ENCODE measurements at regions of chr13 and their contacts with region 1.

Region 1: DNA sequence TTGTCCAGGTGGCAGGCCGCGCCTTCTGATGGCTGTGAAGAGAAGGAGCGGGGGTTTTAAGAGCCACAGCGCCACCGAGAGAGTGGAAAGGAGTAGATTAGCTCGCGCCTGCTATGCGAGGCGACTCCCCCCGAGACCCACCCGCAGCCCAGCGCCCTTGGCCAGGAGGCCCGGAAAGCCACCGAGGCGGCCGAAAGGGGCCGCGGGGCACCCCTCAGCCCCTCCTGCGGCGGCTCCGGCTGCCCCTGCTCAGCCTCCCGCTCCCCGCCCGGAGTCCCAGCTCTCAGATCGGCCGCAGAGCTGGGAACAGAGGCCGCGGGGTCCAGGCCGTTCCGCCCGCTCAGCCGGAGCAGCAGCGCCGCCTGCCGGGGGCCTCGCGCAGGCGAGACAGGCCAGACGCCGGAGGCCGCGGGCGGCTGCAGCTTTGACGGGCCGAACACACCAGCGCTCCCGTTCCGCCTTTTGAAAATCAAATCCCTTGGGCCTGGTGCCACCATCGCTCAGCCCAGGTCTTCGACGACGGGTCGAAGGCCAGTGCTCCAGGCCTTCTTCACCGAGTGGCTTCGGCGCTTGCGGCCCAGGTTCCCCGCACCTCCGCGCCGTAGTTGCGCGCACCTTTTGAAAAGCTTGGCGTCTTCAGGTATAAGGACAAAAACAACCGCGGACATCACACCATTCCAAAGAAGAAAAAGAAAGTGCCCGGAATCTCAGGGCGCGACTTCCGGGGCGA is 15.3 kb downstream of the CDX2 start:
- DNase-seq: peak; percentile 55
- ATAC-seq: peak; percentile 99
- H3K4me3 ChIP-seq: peak overlapping the region; percentile 45
- H3K27ac ChIP-seq: no peak overlapping the region
- H3K4me1 ChIP-seq: no peaks in the 10 kb centered on the region
- H3K27me3 ChIP-seq: peaks cover 54% of the 10 kb centered on the region
- CTCF ChIP-seq: peak; percentile 81
- POLR2A ChIP-seq: no peak
- RAD21 ChIP-seq: peak; percentile 66

Region 2: GRCh38 chr13:27833206-27833605 is 120.6 kb before region 1 on chr13:
- CTCF ChIA-PET with region 1: interaction called, 10 read pairs
- POLR2A ChIA-PET with region 1: no interaction called
- dilution Hi-C with region 1: no loop called
- in situ Hi-C with region 1: no loop called
- intact Hi-C with region 1: loop called (anchors 1 kb)
- DNase-seq: no peak
- ATAC-seq: no peak
- H3K4me3 ChIP-seq: no peak overlapping the region
- H3K27ac ChIP-seq: no peak overlapping the region
- H3K4me1 ChIP-seq: no peaks in the 10 kb centered on the region
- H3K27me3 ChIP-seq: peaks cover 4% of the 10 kb centered on the region; the same call in 1 of the 2 replicates
- CTCF ChIP-seq: no peak
- POLR2A ChIP-seq: no peak
- RAD21 ChIP-seq: no peak

Region 3: GRCh38 chr13:27868641-27869435 is 85.0 kb before region 1 on chr13:
- CTCF ChIA-PET with region 1: interaction called, 5 read pairs
- POLR2A ChIA-PET with region 1: no interaction called
- dilution Hi-C with region 1: no loop called
- in situ Hi-C with region 1: no loop called
- intact Hi-C with region 1: loop called (anchors 5 kb)
- DNase-seq: peak; percentile 5
- ATAC-seq: no peak
- H3K4me3 ChIP-seq: no peak overlapping the region
- H3K27ac ChIP-seq: no peak overlapping the region
- H3K4me1 ChIP-seq: no peaks in the 10 kb centered on the region
- H3K27me3 ChIP-seq: peaks cover 2% of the 10 kb centered on the region; the same call in 1 of the 2 replicates
- CTCF ChIP-seq: peak; percentile 55
- POLR2A ChIP-seq: no peak
- RAD21 ChIP-seq: peak; percentile 38